Caco-2 (cell line): ENCODE measurements at regions of chr2 and their contacts with region 1.

Region 1: GRCh38 chr2:132448771-132449170 is 32.2 kb downstream of the GPR39 start:
- DNase-seq: peak in 1 of 2 experiments; percentile 50
- H3K4me3 ChIP-seq: no peak overlapping the region
- H3K4me3 Mint-ChIP-seq: peak overlapping the region; percentile 20
- H3K27ac Mint-ChIP-seq: no peak overlapping the region
- H3K4me1 ChIP-seq: peaks cover 38% of the 10 kb centered on the region
- H3K4me1 Mint-ChIP-seq: peaks cover 31% of the 10 kb centered on the region
- H3K27me3 ChIP-seq: no peaks in the 10 kb centered on the region
- H3K27me3 Mint-ChIP-seq: no peaks in the 10 kb centered on the region
- CTCF ChIP-seq: peak; percentile 50 to 67

Region 2: DNA sequence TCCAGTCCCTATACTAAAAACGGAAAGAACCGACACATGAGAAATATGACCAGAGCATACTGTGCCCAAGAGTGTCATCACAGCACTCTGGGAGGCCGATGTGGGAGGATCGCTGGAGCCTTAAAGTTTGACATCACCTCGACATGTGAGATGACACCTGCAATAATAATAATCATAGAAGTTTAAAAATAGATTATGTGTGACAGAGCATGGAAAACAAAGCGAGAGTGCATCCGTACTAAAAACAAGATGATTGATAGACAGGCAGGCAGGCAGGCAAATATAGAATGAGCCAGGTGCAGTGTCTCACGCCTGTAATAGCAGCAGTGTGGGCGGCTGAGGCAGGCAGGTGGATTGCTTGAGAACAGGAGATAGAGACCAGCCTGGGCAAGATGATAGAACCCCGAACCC is 172.2 kb before region 1 on chr2:
- CTCF ChIA-PET with region 1: no interaction called
- POLR2A ChIA-PET with region 1: no interaction called
- intact Hi-C with region 1: no loop called
- DNase-seq: no peak
- H3K4me3 ChIP-seq: no peak overlapping the region
- H3K4me3 Mint-ChIP-seq: no peak overlapping the region
- H3K27ac Mint-ChIP-seq: no peak overlapping the region
- H3K4me1 ChIP-seq: no peaks in the 10 kb centered on the region
- H3K4me1 Mint-ChIP-seq: no peaks in the 10 kb centered on the region
- H3K27me3 ChIP-seq: no peaks in the 10 kb centered on the region
- H3K27me3 Mint-ChIP-seq: peaks cover 2% of the 10 kb centered on the region
- CTCF ChIP-seq: no peak

Region 3: DNA sequence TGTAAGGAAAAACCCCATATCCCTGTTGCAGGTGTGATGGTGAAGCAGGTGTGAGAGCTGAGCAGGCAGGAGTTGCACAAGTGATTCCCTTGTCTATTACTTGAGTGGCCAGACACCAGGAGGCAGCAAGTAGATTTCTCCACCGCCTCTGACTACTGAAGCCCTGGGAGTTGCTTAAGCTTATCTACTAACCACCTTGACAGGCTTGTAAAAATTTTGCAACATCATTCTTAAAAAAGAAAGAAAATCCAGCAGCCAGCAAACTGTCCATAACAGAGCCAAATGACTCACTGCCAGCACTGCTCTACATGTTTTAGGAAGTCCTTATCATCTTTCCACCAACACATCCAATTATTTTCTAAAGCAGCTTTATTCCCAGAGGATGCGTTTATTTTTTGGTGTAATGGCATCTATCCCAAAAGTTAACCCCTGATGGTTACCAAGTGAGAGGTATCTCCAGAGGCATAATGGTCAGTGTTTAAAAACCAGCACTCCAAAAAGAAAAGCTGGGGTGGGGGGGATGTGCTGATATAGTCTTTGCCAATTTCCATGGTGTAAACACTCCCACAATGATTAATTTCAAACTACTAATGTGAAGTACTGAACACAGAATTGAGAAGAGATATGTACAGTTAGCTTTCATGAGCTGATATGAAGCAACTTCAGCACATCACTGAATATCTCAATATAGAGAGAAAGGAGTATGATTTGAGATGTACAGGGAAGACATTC is 48.4 kb before region 1 on chr2:
- CTCF ChIA-PET with region 1: interaction called, 3 read pairs
- POLR2A ChIA-PET with region 1: no interaction called
- intact Hi-C with region 1: loop called (anchors 1 kb)
- DNase-seq: peak; percentile 76 to 79
- H3K4me3 ChIP-seq: no peak overlapping the region
- H3K4me3 Mint-ChIP-seq: no peak overlapping the region
- H3K27ac Mint-ChIP-seq: no peak overlapping the region
- H3K4me1 ChIP-seq: no peaks in the 10 kb centered on the region
- H3K4me1 Mint-ChIP-seq: peaks cover 22% of the 10 kb centered on the region
- H3K27me3 ChIP-seq: no peaks in the 10 kb centered on the region
- H3K27me3 Mint-ChIP-seq: no peaks in the 10 kb centered on the region
- CTCF ChIP-seq: peak in 1 of 2 experiments; percentile 37